ENCODE measurements at regions of chr6 and their contacts with region 1.

Region 1: GRCh38 chr6:140784573-140784972 is 1348.2 kb upstream of the GJE1 start:
- DNase-seq: no peak
- ATAC-seq: no peak
- H3K4me3 ChIP-seq: no peak overlapping the region
- H3K27ac ChIP-seq: no peak overlapping the region
- H3K4me1 ChIP-seq: no peaks in the 10 kb centered on the region
- H3K27me3 ChIP-seq: no peaks in the 10 kb centered on the region
- CTCF ChIP-seq: no peak
- EP300 ChIP-seq: no peak
- POLR2A ChIP-seq: no peak
- RAD21 ChIP-seq: no peak

Region 2: GRCh38 chr6:141290941-141291721 is 506.6 kb after region 1 on chr6:
- CTCF ChIA-PET with region 1: no interaction called
- POLR2A ChIA-PET with region 1: no interaction called
- in situ Hi-C with region 1: loop called (anchors 25 kb)
- intact Hi-C with region 1: no loop called
- DNase-seq: no peak
- ATAC-seq: no peak
- H3K4me3 ChIP-seq: no peak overlapping the region
- H3K27ac ChIP-seq: no peak overlapping the region
- H3K4me1 ChIP-seq: no peaks in the 10 kb centered on the region
- H3K27me3 ChIP-seq: no peaks in the 10 kb centered on the region
- CTCF ChIP-seq: no peak
- EP300 ChIP-seq: no peak
- POLR2A ChIP-seq: no peak
- RAD21 ChIP-seq: no peak